ENCODE measurements at regions of chr9 and their contacts with region 1.

Region 1: DNA sequence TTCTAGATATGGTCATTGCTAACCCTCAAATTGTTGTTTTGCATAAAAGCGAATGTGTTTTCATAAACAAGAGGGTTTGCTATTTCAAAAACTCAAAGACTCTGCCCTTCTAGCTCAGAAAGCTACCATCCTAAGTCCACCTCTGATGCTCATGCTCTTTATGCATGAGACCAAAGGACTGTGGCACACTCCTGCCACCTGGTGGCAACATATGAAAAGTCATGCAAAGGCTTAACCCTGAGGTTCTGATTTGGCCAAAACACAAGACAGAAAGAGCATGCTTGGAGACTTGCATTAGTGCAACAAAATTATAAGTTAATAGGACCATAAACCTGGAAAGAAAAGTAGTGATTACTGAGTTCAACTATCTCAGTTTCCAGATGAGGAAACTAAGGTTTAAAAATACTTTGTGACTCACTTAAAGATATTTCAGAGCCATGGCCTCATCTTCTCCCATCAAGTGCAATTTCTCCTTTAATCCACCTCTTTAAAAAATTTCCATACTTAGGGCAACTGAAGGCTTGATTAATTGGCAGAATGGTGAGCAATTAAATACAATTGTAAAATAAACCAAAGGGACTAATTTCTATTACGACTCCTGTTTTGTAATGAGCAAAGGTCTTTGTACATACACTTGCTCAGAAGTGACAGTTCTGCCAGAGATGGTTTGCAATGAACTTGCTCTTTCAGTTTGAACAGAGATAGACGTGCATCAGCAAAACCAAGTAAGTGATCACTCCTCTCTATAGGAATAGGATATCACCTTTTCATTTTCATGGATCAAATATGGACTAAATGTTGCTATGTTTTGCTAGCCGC is 110.7 kb upstream of the RAD23B start:
- DNase-seq: peak; percentile 72 to 80
- H3K4me3 ChIP-seq: no peak overlapping the region
- H3K4me3 Mint-ChIP-seq: no peak overlapping the region
- H3K27ac Mint-ChIP-seq: no peak overlapping the region
- H3K4me1 ChIP-seq: peaks cover 6% of the 10 kb centered on the region; the same call in 1 of the 2 replicates
- H3K4me1 Mint-ChIP-seq: no peaks in the 10 kb centered on the region
- H3K27me3 ChIP-seq: no peaks in the 10 kb centered on the region
- H3K27me3 Mint-ChIP-seq: no peaks in the 10 kb centered on the region
- CTCF ChIP-seq: peak; percentile 82 to 87

Region 2: GRCh38 chr9:105901514-105902109 is 1270.8 kb before region 1 on chr9:
- CTCF ChIA-PET with region 1: no interaction called
- POLR2A ChIA-PET with region 1: no interaction called
- intact Hi-C with region 1: loop called (anchors 5 kb)
- DNase-seq: peak; percentile 66 to 84
- H3K4me3 ChIP-seq: no peak overlapping the region
- H3K4me3 Mint-ChIP-seq: no peak overlapping the region
- H3K27ac Mint-ChIP-seq: no peak overlapping the region
- H3K4me1 ChIP-seq: peaks cover 4% of the 10 kb centered on the region
- H3K4me1 Mint-ChIP-seq: no peaks in the 10 kb centered on the region
- H3K27me3 ChIP-seq: no peaks in the 10 kb centered on the region
- H3K27me3 Mint-ChIP-seq: peaks cover 5% of the 10 kb centered on the region
- CTCF ChIP-seq: peak; percentile 70 to 74

Region 3: GRCh38 chr9:106648799-106649198 is 523.6 kb before region 1 on chr9:
- CTCF ChIA-PET with region 1: no interaction called
- POLR2A ChIA-PET with region 1: no interaction called
- intact Hi-C with region 1: loop called (anchors 10 kb)
- DNase-seq: peak in 1 of 2 experiments; percentile 14
- H3K4me3 ChIP-seq: no peak overlapping the region
- H3K4me3 Mint-ChIP-seq: no peak overlapping the region
- H3K27ac Mint-ChIP-seq: no peak overlapping the region
- H3K4me1 ChIP-seq: no peaks in the 10 kb centered on the region
- H3K4me1 Mint-ChIP-seq: no peaks in the 10 kb centered on the region
- H3K27me3 ChIP-seq: no peaks in the 10 kb centered on the region
- H3K27me3 Mint-ChIP-seq: no peaks in the 10 kb centered on the region
- CTCF ChIP-seq: peak; percentile 27 to 38

Region 4: DNA sequence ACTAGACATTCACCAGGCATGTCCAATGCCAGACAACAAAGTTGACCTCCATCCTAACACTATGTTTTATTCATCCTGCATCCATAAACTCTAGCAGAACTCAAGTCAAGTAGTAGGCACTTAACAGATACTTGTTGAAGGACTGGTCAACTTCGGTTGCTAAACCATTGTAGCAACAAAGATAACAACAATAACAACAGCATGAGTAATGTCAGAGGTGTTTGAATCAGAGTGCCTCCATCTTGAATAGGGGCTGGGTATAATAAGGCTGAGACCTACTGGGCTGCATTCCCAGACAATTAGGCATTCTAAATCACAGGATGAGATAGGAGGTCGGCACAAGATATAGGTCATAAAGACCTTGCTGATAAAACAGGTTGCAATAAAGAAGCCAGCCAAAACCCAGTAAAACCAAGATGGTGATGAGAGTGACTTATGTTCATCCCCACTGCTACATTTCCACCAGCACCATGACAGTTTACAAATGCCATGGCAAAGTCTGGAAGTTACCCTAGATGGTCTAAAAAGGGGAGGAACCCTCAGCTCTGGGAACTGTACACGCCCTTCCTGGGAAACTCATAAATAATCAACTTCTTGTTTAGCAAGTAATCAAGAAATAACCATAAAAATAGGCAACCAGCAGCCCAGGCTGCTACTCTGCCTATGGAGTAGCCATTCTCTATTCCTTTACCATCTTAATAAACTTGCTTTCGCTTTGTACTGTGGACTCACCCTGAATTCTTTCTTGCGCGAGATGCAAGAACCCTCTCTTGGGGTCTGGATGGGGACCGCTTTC is 489.7 kb before region 1 on chr9:
- CTCF ChIA-PET with region 1: no interaction called
- POLR2A ChIA-PET with region 1: no interaction called
- intact Hi-C with region 1: no loop called
- DNase-seq: no peak
- H3K4me3 ChIP-seq: no peak overlapping the region
- H3K4me3 Mint-ChIP-seq: no peak overlapping the region
- H3K27ac Mint-ChIP-seq: no peak overlapping the region
- H3K4me1 ChIP-seq: 0 out of 2 replicates have a peak, but pooled peaks cover 6% of the 10 kb centered on the region
- H3K4me1 Mint-ChIP-seq: peaks cover 6% of the 10 kb centered on the region
- H3K27me3 ChIP-seq: no peaks in the 10 kb centered on the region
- H3K27me3 Mint-ChIP-seq: no peaks in the 10 kb centered on the region
- CTCF ChIP-seq: no peak

Region 5: GRCh38 chr9:107137495-107138202 is 34.7 kb before region 1 on chr9:
- CTCF ChIA-PET with region 1: interaction called, 3 read pairs
- POLR2A ChIA-PET with region 1: no interaction called
- intact Hi-C with region 1: loop called (anchors 1 kb)
- DNase-seq: peak in 1 of 2 experiments; percentile 44
- H3K4me3 ChIP-seq: no peak overlapping the region
- H3K4me3 Mint-ChIP-seq: no peak overlapping the region
- H3K27ac Mint-ChIP-seq: no peak overlapping the region
- H3K4me1 ChIP-seq: no peaks in the 10 kb centered on the region; the same call in 1 of the 2 replicates
- H3K4me1 Mint-ChIP-seq: no peaks in the 10 kb centered on the region
- H3K27me3 ChIP-seq: no peaks in the 10 kb centered on the region
- H3K27me3 Mint-ChIP-seq: peaks cover 8% of the 10 kb centered on the region
- CTCF ChIP-seq: peak; percentile 36 to 47

Region 6: DNA sequence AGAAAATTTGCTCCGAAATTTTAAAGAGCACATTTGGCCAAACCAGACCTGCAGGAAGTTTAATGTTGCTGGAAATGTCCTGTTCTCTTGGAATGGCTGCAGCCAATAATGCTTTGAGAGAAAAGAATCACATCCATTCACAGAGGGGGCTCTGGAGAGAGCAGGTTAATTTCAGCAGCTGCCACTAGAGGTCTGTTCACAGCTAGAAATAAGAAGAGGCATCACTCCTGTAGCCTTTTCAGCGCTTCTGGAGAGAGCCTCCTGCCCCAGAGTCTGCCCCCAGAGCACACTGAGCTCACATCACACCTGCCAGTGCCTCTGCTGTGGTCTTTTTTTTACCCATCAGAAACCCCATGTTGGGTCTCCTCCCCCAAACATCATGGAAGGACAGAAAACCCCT is 14.0 kb before region 1 on chr9:
- CTCF ChIA-PET with region 1: interaction called, 8 read pairs
- POLR2A ChIA-PET with region 1: no interaction called
- intact Hi-C with region 1: loop called (anchors 1 kb)
- DNase-seq: peak; percentile 46 to 52
- H3K4me3 ChIP-seq: no peak overlapping the region
- H3K4me3 Mint-ChIP-seq: no peak overlapping the region
- H3K27ac Mint-ChIP-seq: no peak overlapping the region
- H3K4me1 ChIP-seq: no peaks in the 10 kb centered on the region
- H3K4me1 Mint-ChIP-seq: no peaks in the 10 kb centered on the region
- H3K27me3 ChIP-seq: no peaks in the 10 kb centered on the region
- H3K27me3 Mint-ChIP-seq: peaks cover 9% of the 10 kb centered on the region
- CTCF ChIP-seq: peak; percentile 68 to 69

Region 7: GRCh38 chr9:107190061-107190935 is 17.9 kb after region 1 on chr9:
- CTCF ChIA-PET with region 1: no interaction called
- POLR2A ChIA-PET with region 1: interaction called, 16 read pairs
- intact Hi-C with region 1: no loop called
- DNase-seq: peak; percentile 64 to 77
- H3K4me3 ChIP-seq: no peak overlapping the region
- H3K4me3 Mint-ChIP-seq: peak overlapping the region; percentile 12
- H3K27ac Mint-ChIP-seq: peak overlapping the region; percentile 49
- H3K4me1 ChIP-seq: peaks cover 29% of the 10 kb centered on the region
- H3K4me1 Mint-ChIP-seq: peaks cover 26% of the 10 kb centered on the region
- H3K27me3 ChIP-seq: no peaks in the 10 kb centered on the region
- H3K27me3 Mint-ChIP-seq: no peaks in the 10 kb centered on the region
- CTCF ChIP-seq: no peak

Region 8: GRCh38 chr9:107229241-107229741 is 56.9 kb after region 1 on chr9:
- CTCF ChIA-PET with region 1: no interaction called
- POLR2A ChIA-PET with region 1: no interaction called
- intact Hi-C with region 1: no loop called
- DNase-seq: no peak
- H3K4me3 ChIP-seq: no peak overlapping the region
- H3K4me3 Mint-ChIP-seq: no peak overlapping the region
- H3K27ac Mint-ChIP-seq: no peak overlapping the region
- H3K4me1 ChIP-seq: peaks cover 12% of the 10 kb centered on the region
- H3K4me1 Mint-ChIP-seq: peaks cover 14% of the 10 kb centered on the region
- H3K27me3 ChIP-seq: no peaks in the 10 kb centered on the region
- H3K27me3 Mint-ChIP-seq: no peaks in the 10 kb centered on the region
- CTCF ChIP-seq: no peak

Measured in Caco-2 (cell line).